ENCODE measurements at regions of chr5 and their contacts with region 1.

Region 1: DNA sequence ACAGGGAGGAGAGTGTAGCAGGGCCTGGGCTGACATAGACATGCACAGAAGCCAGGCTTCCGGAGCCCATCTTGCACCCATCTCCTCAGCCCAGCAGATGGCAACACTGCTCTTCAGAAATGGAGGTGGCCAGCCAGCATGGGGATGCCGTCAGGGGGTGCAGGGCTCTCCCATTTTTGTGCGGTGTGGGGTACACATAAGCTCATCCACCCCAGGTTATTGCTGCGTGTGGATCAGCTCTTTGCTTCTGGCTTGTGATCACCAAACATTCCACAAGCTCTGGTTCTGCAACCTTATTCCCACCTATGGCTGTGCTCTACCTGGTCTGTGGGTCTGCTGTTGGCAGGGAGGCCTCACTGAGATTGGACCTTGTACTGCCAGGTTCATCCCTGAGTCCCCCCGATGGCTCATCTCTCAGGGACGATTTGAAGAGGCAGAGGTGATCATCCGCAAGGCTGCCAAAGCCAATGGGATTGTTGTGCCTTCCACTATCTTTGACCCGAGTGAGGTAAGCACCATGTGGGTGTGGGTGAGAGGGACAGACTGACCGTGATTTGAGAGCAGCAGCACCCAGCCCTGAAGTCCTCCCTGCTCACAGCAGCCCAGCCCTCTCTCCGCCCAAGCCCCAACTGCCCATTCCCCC is 17.3 kb downstream of the SLC22A5 start:
- DNase-seq: peak; percentile 92
- H3K4me3 ChIP-seq: no peak overlapping the region
- H3K27ac ChIP-seq: peak overlapping the region; percentile 91 to 94 (median 92)
- H3K4me1 ChIP-seq: peaks cover 0 to 66% (median 62%) of the 10 kb centered on the region in 4 donors
- H3K27me3 ChIP-seq: no peaks in the 10 kb centered on the region
- CTCF ChIP-seq: peak; percentile 82 to 93 (median 87)
- EP300 ChIP-seq: no peak
- POLR2A ChIP-seq: no peak

Region 2: DNA sequence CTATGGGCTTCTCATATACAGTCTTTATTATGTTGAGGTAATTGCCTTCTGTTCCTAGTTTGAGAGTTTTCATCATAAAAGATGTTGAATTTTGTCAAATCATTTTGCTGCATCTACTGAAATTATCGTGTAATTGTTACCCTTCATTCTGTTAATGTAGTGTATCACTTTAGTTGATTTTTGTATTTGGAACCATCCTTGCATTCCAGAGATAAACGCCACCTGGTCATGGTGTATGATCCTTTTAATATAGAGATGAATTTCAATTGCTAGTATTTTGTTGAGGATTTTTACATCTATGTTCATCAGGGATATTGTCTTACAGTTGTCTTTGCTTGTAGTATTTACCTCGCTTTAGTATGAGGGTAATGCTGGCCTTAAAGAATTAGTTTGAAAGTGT is 460.6 kb before region 1 on chr5:
- intact Hi-C with region 1: no loop called
- DNase-seq: no peak
- H3K4me3 ChIP-seq: no peak overlapping the region
- H3K27ac ChIP-seq: no peak overlapping the region
- H3K4me1 ChIP-seq: no peaks in the 10 kb centered on the region
- H3K27me3 ChIP-seq: no peaks in the 10 kb centered on the region
- CTCF ChIP-seq: no peak
- EP300 ChIP-seq: no peak
- POLR2A ChIP-seq: no peak

Region 3: GRCh38 chr5:132410451-132411381 is 24.0 kb after region 1 on chr5:
- intact Hi-C with region 1: loop called (anchors 1 kb)
- DNase-seq: peak; percentile 94
- H3K4me3 ChIP-seq: peak overlapping the region; percentile 57 to 85 (median 74)
- H3K27ac ChIP-seq: peak overlapping the region; percentile 95 to 99 (median 97)
- H3K4me1 ChIP-seq: peaks cover 0 to 71% (median 62%) of the 10 kb centered on the region in 4 donors
- H3K27me3 ChIP-seq: no peaks in the 10 kb centered on the region
- CTCF ChIP-seq: peak in 3 of 4 experiments; percentile 26 to 63 (median 55)
- EP300 ChIP-seq: peak in 1 of 4 donors; percentile 24
- POLR2A ChIP-seq: no peak

Region 4: DNA sequence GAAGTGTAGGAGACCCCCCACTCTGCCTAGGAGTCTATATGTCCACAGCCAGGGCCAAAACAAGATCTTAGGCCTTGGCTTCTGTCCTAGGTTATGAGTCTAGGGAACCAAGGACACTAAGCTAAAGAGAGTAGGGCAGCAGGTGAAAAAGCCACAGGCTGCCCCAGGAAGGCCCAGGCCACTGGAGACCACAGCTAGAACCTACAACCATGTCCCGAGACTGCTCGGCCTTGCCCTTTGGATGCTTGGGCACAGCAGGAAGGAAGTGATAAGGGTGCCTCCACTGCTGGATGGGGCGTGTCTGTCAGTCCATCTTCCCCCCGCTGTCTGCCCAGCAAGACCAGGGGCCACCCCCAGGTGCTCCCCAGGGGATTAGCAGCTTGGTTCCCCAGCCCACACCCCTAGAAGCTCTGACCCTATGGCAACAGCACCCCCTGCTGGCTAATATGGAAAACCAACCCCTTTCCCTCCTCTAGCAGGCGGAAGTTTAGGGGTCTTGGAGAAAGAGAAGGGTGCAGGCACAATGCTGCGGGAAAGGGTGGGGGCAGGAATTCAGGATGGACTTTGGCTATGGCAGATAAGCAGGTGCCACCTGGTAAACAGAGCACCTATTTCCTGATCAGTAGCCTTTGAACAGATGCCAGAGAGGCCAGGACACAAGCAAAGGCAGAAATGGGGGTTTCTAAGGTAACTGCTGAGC is 114.3 kb after region 1 on chr5:
- intact Hi-C with region 1: loop called (anchors 1 kb)
- DNase-seq: peak; percentile 85
- H3K4me3 ChIP-seq: no peak overlapping the region
- H3K27ac ChIP-seq: peak overlapping the region; percentile 18 to 100 (median 96)
- H3K4me1 ChIP-seq: peaks cover 0 to 44% (median 41%) of the 10 kb centered on the region in 4 donors
- H3K27me3 ChIP-seq: no peaks in the 10 kb centered on the region
- CTCF ChIP-seq: peak; percentile 90 to 93 (median 93)
- EP300 ChIP-seq: no peak
- POLR2A ChIP-seq: no peak

Region 5: GRCh38 chr5:132540764-132541163 is 154.0 kb after region 1 on chr5:
- intact Hi-C with region 1: no loop called
- DNase-seq: no peak
- H3K4me3 ChIP-seq: no peak overlapping the region
- H3K27ac ChIP-seq: no peak overlapping the region
- H3K4me1 ChIP-seq: no peaks in the 10 kb centered on the region
- H3K27me3 ChIP-seq: no peaks in the 10 kb centered on the region
- CTCF ChIP-seq: no peak
- EP300 ChIP-seq: no peak
- POLR2A ChIP-seq: no peak

Region 6: GRCh38 chr5:132556763-132557477 is 170.2 kb after region 1 on chr5 and contains the start of gene RAD50:
- intact Hi-C with region 1: loop called (anchors 5 kb)
- DNase-seq: peak; percentile 97
- H3K4me3 ChIP-seq: peak within 1 kb of the TSS; percentile 51 to 80 (median 75)
- H3K27ac ChIP-seq: peak within 1 kb of the TSS; percentile 89 to 92 (median 91)
- H3K4me1 ChIP-seq: peaks cover 0 to 21% (median 19%) of the 10 kb centered on the region in 4 donors
- H3K27me3 ChIP-seq: no peaks in the 10 kb centered on the region
- CTCF ChIP-seq: no peak
- EP300 ChIP-seq: peak in 1 of 4 donors; percentile 78
- POLR2A ChIP-seq: peak; percentile 70 to 77
- total RNA-seq, gene RAD50: 20.0 to 34.6 (median 29.3) TPM

Region 7: GRCh38 chr5:132736853-132737833 is 350.4 kb after region 1 on chr5 and contains the start of gene KIF3A:
- intact Hi-C with region 1: loop called (anchors 10 kb)
- DNase-seq: peak; percentile 98
- H3K4me3 ChIP-seq: peak within 1 kb of the TSS; percentile 77 to 94 (median 81)
- H3K27ac ChIP-seq: peak within 1 kb of the TSS; percentile 74 to 85 (median 80)
- H3K4me1 ChIP-seq: peaks cover 0 to 19% (median 10%) of the 10 kb centered on the region in 4 donors
- H3K27me3 ChIP-seq: no peaks in the 10 kb centered on the region
- CTCF ChIP-seq: peak in 2 of 4 experiments; percentile 14 to 30
- EP300 ChIP-seq: no peak
- POLR2A ChIP-seq: no peak
- total RNA-seq, gene KIF3A: 7.1 to 19.9 (median 12.9) TPM

Region 8: DNA sequence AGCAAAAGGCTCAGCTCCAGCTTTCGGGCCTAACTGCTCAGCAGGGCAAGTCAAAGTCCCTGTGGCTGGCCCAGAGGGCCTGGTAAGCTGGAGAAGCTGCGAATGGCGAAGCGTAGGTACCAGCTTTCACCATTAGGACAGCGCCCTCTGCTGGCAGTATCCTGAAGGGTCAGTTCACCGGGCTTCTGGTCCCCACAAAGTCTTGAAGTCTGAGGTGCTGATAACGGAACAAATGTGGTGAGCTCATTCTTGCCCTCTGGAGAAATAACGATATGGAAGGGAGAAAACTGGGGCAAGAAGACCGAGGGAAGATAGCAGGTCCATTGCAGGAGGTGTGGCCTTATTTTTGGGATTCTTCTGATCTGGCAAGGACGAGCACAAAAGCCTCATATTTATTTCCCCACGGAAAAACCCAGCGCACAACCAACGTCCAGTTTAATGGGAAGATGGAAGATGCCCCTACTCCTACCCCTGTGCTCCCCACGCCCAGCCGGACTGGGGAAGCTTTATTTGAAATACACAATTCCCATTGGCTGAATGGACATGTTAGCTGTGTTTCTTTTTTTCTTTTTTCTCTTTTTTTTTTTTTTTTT is 433.5 kb after region 1 on chr5:
- intact Hi-C with region 1: loop called (anchors 5 kb)
- DNase-seq: peak; percentile 94
- H3K4me3 ChIP-seq: no peak overlapping the region
- H3K27ac ChIP-seq: no peak overlapping the region
- H3K4me1 ChIP-seq: peaks cover 0 to 19% (median 11%) of the 10 kb centered on the region in 4 donors
- H3K27me3 ChIP-seq: peaks cover 0 to 17% (median 12%) of the 10 kb centered on the region in 3 donors
- CTCF ChIP-seq: peak; percentile 77 to 93 (median 88)
- EP300 ChIP-seq: no peak
- POLR2A ChIP-seq: no peak